WTC11 (cell line): ENCODE measurements at regions of chr20 and their contacts with region 1.

Region 1: DNA sequence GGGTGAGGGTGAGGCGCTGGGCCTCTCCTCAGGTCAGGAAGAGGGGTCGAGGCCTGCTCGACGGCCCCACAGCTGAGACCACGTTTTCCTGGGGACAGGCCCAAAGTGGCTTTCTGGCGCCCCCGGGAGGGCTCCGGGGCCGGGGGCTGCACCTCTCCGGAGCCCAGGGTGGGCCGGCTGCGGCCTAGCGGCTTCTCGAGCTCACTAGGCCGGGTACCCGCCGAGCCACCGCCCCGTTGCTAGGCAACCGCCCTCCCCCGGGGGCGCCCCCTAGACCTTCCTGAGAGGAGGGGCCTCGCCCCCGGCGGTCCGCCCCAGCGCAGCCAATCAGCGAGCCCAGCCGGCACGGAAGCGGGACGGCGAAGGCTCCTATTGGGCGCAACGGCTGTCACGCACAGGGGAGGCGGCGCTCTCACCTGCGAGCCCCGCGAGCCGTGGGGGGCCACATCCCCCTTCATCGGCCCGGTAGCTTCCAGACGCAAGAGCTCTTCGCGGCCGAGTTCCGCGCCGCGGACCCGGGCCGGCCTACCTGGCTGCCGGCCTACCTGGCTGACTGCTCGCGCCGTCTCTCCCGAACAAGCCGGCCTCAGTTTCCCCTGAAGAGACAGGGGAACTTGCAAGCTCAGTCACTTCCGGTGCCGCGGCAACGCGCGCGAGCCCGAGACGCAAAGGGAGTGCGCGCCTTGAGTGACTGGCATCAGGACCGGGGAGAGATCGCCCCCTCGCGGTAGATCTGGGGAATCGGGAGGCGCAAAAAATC is 831 bp upstream of the BCL2L1 start:
- DNase-seq: peak; percentile 99
- ATAC-seq: peak; percentile 86
- H3K4me3 Mint-ChIP-seq: peak overlapping the region; percentile 86
- H3K27ac Mint-ChIP-seq: peak overlapping the region; percentile 94
- H3K4me1 Mint-ChIP-seq: peaks cover 38% of the 10 kb centered on the region
- H3K27me3 Mint-ChIP-seq: no peaks in the 10 kb centered on the region
- CTCF ChIP-seq: no peak; the same call in none of the 2 replicates

Region 2: DNA sequence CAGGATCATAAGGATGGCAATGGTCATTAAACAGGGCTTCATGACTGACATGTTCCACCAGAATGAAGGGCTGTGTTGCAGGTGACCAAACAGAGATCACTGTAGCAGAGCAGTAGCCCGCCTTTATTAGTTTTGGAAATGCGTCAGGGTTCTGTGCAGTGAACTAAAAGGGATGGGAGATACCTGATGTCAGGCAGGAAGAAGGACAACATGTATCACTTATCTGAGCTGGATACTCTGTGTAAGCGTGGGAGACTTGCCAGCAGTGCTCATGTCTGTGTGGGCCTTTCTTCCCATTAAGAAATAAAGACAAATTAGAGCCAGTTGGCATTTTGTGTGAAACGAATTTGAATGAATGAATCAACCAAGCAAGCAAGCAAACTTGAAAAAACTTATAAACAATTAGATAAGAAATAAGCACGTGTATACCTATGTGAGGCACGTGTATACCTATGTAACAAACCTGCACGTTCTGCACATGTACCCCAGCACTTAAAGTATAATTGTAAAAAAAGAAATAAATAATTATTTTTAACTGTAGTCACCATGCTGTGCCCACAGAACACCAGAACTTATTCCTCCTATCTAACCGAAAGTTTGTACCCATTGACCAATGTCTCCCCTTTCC is 414.9 kb before region 1 on chr20 and contains the start of gene DEFB116:
- CTCF ChIA-PET with region 1: no interaction called
- POLR2A ChIA-PET with region 1: no interaction called
- DNase-seq: no peak
- ATAC-seq: no peak
- H3K4me3 Mint-ChIP-seq: no peak within 1 kb of the TSS
- H3K27ac Mint-ChIP-seq: no peak within 1 kb of the TSS
- H3K4me1 Mint-ChIP-seq: no peaks in the 10 kb centered on the region
- H3K27me3 Mint-ChIP-seq: peaks cover 12% of the 10 kb centered on the region
- CTCF ChIP-seq: no peak
- total RNA-seq, gene DEFB116: not detected in 3 replicates

Region 3: DNA sequence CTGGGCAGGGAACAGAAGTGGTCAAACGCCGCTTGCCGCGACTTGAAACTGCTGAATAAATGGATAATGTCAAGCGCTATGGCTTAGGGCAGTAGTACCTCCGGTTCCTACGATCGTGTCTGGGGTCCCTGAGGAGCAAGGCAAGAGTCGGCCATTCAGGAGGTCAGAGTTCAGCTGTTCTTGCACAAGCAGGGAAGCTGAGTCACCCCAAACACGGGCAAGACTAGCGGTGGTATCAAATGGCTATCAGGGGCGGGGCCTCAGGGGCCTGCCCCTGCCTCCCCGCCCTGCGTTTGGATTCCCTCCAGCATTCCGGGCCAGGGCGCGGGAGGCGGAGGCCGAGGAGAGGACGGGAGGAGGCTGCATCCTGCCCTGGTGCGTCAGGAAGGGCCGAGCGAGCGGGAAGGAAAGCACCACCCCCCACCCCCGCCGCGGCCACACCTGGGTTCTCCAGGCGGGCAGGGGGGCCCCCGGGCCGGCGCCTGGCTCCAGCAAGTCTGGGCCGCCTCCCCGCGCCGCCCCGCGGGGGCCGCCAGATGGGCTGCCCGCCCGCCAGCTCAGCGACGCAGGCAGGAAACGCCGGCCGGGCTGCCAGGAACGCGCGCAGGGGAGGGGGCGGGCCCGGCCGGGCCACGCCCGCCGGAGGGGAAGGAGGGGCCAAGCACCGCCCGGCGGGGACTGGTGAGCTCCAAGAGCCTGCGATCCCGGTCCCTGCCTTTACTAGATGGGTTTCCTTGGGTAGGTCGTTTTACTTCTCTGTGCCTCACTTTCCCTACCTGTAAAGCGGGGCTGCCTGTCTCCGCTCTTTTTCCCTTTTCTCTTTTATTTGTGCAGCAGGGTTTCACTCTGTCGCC is 150.6 kb before region 1 on chr20:
- CTCF ChIA-PET with region 1: interaction called, 31 read pairs
- POLR2A ChIA-PET with region 1: interaction called, 4 read pairs
- DNase-seq: peak; percentile 94
- ATAC-seq: peak; percentile 82
- H3K4me3 Mint-ChIP-seq: peak overlapping the region; percentile 83
- H3K27ac Mint-ChIP-seq: peak overlapping the region; percentile 97
- H3K4me1 Mint-ChIP-seq: peaks cover 60% of the 10 kb centered on the region
- H3K27me3 Mint-ChIP-seq: no peaks in the 10 kb centered on the region; the same call in 1 of the 2 replicates
- CTCF ChIP-seq: no peak

Region 4: DNA sequence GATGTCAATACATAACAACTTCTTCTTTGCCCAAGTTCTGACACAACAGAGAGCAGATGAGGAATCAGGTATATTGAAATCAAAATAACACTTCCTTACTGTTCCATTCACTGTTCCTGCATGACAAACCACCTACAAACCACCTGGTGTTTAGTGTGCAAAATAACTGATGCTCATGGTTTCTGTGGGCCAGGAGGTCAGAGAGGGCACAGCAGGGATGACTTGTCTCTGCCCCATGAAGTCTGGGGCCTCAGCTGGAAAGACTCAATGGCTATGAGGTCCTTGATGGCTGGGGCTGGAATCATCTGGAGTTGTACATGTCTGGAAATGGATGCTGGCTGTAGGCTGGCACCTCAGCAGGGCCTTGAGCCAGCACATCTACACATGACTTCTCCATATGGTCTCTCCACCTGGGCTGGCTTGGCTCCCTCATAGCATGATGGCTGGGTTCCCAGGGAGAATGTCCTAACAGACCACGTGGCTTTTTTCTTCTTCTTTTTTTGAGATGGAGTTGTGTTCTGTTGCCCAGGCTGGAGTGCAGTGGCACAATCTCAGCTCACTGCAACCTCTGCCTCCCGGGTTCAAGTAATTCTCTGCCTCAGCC is 93.2 kb before region 1 on chr20:
- CTCF ChIA-PET with region 1: interaction called, 146 read pairs
- POLR2A ChIA-PET with region 1: interaction called, 5 read pairs
- DNase-seq: no peak
- ATAC-seq: no peak
- H3K4me3 Mint-ChIP-seq: no peak overlapping the region
- H3K27ac Mint-ChIP-seq: no peak overlapping the region
- H3K4me1 Mint-ChIP-seq: no peaks in the 10 kb centered on the region
- H3K27me3 Mint-ChIP-seq: no peaks in the 10 kb centered on the region
- CTCF ChIP-seq: no peak

Region 5: DNA sequence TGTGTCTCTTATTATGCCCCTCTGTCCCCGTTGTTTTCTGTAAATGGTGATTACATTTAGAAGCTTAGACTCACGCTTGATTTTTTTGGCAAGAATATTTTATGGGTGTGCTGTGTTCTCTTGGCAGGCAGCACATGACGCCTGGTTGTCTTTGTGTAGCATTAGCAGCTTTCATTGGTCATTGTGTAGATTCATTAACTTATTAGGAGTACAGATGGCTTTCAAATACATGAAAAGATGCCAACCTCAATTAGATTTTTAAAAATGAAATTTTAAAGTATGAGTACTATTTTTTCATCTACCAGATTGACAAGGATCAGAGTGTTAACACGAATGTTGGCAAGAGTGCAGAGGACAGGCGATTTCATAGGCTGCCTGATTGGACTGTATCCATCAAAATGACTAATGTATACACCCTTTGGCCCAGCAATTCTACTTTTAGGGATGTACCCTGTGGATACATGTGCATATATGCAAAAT is 70.5 kb before region 1 on chr20:
- CTCF ChIA-PET with region 1: interaction called, 27 read pairs
- POLR2A ChIA-PET with region 1: no interaction called
- DNase-seq: no peak
- ATAC-seq: no peak
- H3K4me3 Mint-ChIP-seq: no peak overlapping the region
- H3K27ac Mint-ChIP-seq: no peak overlapping the region
- H3K4me1 Mint-ChIP-seq: no peaks in the 10 kb centered on the region
- H3K27me3 Mint-ChIP-seq: peaks cover 4% of the 10 kb centered on the region
- CTCF ChIP-seq: no peak

Region 6: DNA sequence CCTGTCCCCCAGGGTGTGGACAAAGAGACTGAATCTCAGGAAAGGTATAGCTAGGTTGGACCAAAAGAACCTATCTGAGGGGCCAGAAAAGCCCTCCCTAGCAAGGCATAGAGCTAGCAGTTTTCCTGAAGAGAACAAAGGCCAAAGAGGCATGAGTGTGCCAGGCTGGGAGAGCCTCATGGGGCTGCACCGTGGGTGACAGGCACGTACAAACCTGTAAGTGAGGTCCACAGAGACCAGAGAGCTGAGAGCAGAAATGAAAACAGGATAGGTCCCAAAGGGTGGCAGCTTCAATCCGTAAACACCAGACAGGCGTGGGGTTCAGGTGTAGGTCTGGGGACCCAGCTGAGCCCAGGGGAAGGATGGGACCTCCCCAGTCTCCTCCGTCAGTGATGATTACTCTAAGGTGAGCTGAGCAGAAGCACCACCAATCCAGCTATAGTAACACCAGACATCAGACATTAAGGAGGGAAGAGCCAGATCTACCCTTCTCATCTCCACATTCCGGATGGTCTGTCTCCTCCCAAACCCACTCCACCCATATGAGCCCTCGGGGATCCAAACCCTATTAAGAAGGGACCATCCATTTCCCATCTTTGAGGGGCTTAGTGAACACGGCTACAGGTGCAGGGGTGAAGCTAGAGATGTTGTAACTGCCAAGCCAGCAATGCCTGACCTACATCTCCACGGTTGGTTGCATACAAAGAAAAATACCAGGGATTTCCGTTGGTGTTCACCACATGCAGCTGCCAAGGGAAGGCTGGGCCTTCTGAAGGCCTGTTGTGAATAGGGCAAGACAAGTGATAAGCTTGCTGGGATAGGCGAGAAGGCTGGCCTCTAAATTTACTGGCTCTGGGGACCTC is 39.1 kb before region 1 on chr20:
- CTCF ChIA-PET with region 1: interaction called, 36 read pairs
- POLR2A ChIA-PET with region 1: interaction called, 4 read pairs
- DNase-seq: no peak
- ATAC-seq: no peak
- H3K4me3 Mint-ChIP-seq: no peak overlapping the region
- H3K27ac Mint-ChIP-seq: peak overlapping the region; percentile 94
- H3K4me1 Mint-ChIP-seq: peaks cover 30% of the 10 kb centered on the region
- H3K27me3 Mint-ChIP-seq: no peaks in the 10 kb centered on the region
- CTCF ChIP-seq: no peak

Region 7: DNA sequence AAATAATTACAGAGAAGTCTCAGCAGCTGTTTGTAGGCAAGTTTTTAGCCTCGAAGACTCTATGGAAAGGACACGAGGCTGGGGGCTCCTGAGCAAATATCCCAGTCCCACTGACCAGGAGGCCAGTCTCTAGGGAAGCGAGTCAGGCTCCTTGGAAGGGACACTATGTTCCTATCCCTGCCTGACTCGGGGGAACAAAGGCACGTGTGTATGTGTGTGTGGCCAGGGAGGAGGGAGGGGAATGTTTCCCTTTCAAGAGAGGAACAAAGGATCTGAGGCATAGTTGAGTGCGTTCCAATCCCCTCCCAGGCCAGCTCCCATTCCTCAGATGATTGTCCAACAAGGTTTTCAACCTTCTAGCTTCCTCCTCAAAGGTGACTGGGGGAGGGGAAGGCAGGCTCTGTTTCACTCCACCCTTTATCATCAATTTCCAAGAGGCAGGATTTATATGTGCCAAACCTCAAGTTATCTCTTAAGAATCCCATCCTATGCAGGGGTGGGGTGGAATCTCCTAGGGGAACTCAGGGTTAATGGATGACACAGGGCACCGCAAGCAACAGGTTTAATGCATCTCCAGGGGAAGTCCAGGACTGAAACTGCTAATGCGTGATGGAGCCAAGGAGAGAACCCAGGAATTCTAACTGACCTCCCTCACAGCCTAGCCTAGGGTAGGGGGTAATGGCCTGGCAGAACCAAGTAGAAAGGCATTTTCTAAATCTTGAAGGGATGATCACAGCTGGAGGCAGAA is 10.8 kb before region 1 on chr20:
- CTCF ChIA-PET with region 1: interaction called, 69 read pairs
- POLR2A ChIA-PET with region 1: interaction called, 32 read pairs
- DNase-seq: peak; percentile 57
- ATAC-seq: peak; percentile 81
- H3K4me3 Mint-ChIP-seq: peak overlapping the region; percentile 45
- H3K27ac Mint-ChIP-seq: peak overlapping the region; percentile 93
- H3K4me1 Mint-ChIP-seq: peaks cover 88% of the 10 kb centered on the region
- H3K27me3 Mint-ChIP-seq: no peaks in the 10 kb centered on the region
- CTCF ChIP-seq: no peak

Region 8: DNA sequence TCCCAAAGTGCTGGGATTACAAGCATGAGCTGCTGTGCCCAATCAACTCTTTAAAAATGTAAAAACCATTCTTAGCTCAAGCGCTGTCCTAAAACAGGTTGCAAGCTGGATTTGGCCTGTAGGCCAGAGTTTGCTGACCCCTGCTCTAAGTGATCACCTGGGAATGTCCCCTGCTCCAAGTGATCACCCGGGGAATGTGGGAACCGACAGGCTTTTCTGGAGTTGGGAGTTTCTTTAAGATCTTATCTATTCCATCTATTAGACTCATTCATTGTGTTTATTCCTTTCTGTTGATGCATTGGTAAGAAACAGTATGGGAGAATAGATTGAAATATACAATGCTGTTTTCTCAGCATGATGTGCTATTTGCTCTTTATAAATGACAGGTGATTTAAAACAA is 71.9 kb after region 1 on chr20:
- CTCF ChIA-PET with region 1: no interaction called
- POLR2A ChIA-PET with region 1: no interaction called
- DNase-seq: no peak
- ATAC-seq: no peak
- H3K4me3 Mint-ChIP-seq: no peak overlapping the region
- H3K27ac Mint-ChIP-seq: no peak overlapping the region
- H3K4me1 Mint-ChIP-seq: no peaks in the 10 kb centered on the region
- H3K27me3 Mint-ChIP-seq: no peaks in the 10 kb centered on the region
- CTCF ChIP-seq: no peak

Region 9: DNA sequence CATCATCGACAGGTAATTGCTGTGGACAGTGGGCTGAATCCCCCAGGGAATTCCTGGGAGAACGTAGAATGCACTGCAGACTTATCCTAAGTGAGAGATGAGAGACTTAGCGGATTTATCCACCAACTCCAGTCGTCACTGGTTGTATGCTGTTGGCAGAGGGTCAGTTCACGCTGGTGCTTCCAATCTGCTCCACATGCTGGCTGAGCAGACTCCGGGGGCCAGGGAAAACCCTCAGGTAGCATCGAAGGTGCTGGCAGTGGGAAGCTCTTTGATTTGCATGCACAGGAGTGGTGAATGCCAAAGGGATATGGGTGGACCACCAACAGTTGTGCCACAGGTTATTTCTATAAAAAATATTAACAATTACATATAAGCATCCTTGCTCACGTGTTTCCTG is 167.1 kb after region 1 on chr20:
- CTCF ChIA-PET with region 1: no interaction called
- POLR2A ChIA-PET with region 1: no interaction called
- DNase-seq: no peak
- ATAC-seq: no peak
- H3K4me3 Mint-ChIP-seq: no peak overlapping the region
- H3K27ac Mint-ChIP-seq: no peak overlapping the region
- H3K4me1 Mint-ChIP-seq: no peaks in the 10 kb centered on the region; the same call in 1 of the 2 replicates
- H3K27me3 Mint-ChIP-seq: peaks cover 11% of the 10 kb centered on the region
- CTCF ChIP-seq: no peak

Region 10: DNA sequence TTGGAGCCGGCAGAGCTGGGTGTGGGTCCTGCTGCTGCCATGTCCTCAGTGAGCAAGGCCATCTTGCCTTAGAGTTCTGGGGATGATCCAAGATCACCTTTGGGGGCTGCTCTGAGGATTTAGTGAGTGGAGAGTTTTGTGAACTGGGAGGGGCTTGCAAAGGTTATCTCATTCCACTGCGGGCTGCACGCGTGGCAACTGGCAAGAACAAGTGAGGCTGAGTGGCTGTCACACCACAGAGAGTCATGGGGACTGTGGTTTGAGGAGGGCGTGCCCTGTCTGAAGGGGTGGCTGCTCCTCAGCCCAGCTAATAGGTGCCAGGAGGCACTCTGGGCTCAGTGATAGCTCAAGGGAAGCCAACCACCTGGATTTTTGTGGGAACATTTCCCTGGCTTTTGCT is 184.5 kb after region 1 on chr20:
- CTCF ChIA-PET with region 1: no interaction called
- POLR2A ChIA-PET with region 1: no interaction called
- DNase-seq: no peak
- ATAC-seq: no peak
- H3K4me3 Mint-ChIP-seq: no peak overlapping the region
- H3K27ac Mint-ChIP-seq: no peak overlapping the region
- H3K4me1 Mint-ChIP-seq: peaks cover 38% of the 10 kb centered on the region
- H3K27me3 Mint-ChIP-seq: no peaks in the 10 kb centered on the region; the same call in 1 of the 2 replicates
- CTCF ChIP-seq: no peak